Caco-2 (cell line): ENCODE measurements at regions of chr2 and their contacts with region 1.

Region 1: GRCh38 chr2:40844353-40845277 is 392.7 kb upstream of the SLC8A1 start:
- DNase-seq: peak; percentile 41 to 52
- H3K4me3 ChIP-seq: no peak overlapping the region
- H3K4me3 Mint-ChIP-seq: peak overlapping the region; percentile 25
- H3K27ac Mint-ChIP-seq: no peak overlapping the region
- H3K4me1 ChIP-seq: no peaks in the 10 kb centered on the region
- H3K4me1 Mint-ChIP-seq: no peaks in the 10 kb centered on the region
- H3K27me3 ChIP-seq: no peaks in the 10 kb centered on the region
- H3K27me3 Mint-ChIP-seq: peaks cover 5% of the 10 kb centered on the region
- CTCF ChIP-seq: peak; percentile 23 to 24

Region 2: GRCh38 chr2:41400088-41400665 is 555.6 kb after region 1 on chr2:
- CTCF ChIA-PET with region 1: interaction called, 5 read pairs
- POLR2A ChIA-PET with region 1: no interaction called
- intact Hi-C with region 1: loop called (anchors 1 kb)
- DNase-seq: peak in 1 of 2 experiments; percentile 29
- H3K4me3 ChIP-seq: no peak overlapping the region
- H3K4me3 Mint-ChIP-seq: no peak overlapping the region
- H3K27ac Mint-ChIP-seq: no peak overlapping the region
- H3K4me1 ChIP-seq: no peaks in the 10 kb centered on the region; the same call in 1 of the 2 replicates
- H3K4me1 Mint-ChIP-seq: no peaks in the 10 kb centered on the region
- H3K27me3 ChIP-seq: no peaks in the 10 kb centered on the region
- H3K27me3 Mint-ChIP-seq: peaks cover 11% of the 10 kb centered on the region
- CTCF ChIP-seq: peak; percentile 22 to 34

Region 3: DNA sequence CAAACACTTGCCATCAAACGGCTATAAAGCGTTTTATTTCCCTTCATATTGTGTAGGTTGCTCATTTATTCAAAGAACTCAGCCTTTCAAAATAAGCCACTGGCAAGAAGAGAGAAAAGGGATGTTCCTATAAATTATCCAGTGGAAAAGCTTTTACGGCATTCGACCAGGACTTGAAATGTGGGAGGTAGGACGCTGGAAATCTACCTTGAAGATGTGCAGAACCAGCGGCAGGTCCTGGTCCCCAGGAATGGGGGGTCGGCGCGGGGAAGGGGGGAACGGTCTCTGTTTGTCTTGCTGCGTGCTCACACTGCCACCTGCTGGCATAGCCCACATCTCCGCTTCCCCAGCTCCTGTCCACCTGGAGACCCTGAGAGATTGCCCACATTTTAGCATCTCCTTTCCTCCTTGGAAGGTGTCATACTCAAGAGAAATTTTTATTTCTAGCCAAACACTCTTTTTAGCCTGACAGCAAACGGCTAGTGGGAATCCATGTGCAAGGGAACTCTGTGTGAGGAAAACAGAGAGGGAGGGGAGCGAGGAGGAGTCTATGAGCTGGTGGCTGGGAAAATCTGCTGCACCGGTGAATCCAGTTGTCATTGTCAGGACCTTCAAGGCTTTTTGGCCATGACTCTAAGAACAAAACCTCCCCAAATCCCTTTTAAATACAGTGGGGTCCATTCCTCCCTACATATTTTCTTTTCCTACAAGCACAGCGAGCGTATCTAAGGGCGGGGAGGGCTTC is 854.2 kb after region 1 on chr2:
- CTCF ChIA-PET with region 1: interaction called, 3 read pairs
- POLR2A ChIA-PET with region 1: no interaction called
- intact Hi-C with region 1: loop called (anchors 1 kb)
- DNase-seq: peak in 1 of 2 experiments; percentile 47
- H3K4me3 ChIP-seq: no peak overlapping the region
- H3K4me3 Mint-ChIP-seq: no peak overlapping the region
- H3K27ac Mint-ChIP-seq: no peak overlapping the region
- H3K4me1 ChIP-seq: no peaks in the 10 kb centered on the region
- H3K4me1 Mint-ChIP-seq: no peaks in the 10 kb centered on the region
- H3K27me3 ChIP-seq: peaks cover under 1% of the 10 kb centered on the region; the same call in 1 of the 2 replicates
- H3K27me3 Mint-ChIP-seq: peaks cover 19% of the 10 kb centered on the region
- CTCF ChIP-seq: peak; percentile 83 to 84